ENCODE measurements at regions of chr12 and their contacts with region 1.

Region 1: GRCh38 chr12:80205960-80206359 is 106.6 kb downstream of the OTOGL start:
- DNase-seq: no peak
- CTCF ChIP-seq: no peak

Region 2: DNA sequence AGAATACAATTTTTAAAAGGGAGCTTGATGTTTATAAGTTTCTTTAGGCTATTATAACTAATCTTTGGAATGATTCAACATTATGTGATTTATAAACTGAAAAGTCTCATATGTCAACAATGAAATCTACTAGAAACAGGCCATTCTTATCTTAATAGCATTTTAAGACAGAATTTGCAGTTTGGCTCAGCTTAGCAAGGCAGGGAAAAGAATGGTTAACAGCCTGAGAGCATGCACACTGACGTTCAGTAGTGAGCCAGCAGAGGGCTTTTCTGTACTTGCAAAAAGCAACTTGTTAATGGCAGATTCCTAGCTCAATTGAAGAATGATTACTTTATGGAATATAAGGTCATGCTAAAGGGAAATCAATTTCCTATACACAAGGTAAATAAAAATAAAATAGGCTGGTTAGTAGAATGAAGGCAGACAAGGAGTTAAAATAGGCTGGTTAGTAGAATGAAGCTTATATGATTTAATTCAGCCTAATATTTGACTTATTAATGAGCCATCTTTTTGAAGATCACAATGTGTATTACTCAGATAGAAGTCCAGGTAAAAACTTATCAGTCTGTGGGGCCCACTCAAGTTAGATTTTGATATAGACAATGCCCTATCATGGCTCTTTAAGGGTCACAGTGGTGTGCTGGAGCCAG is 10.8 kb before region 1 on chr12:
- CTCF ChIA-PET with region 1: interaction called, 11 read pairs
- POLR2A ChIA-PET with region 1: no interaction called
- DNase-seq: no peak
- CTCF ChIP-seq: peak; percentile 49